Activated CD4-positive, alpha-beta T cell treated with anti-CD3 and anti-CD28 coated beads for 36 hours (primary cell): ENCODE measurements at regions of chr11 and their contacts with region 1.

Region 1: GRCh38 chr11:2444821-2445745 is at the start of gene KCNQ1:
- DNase-seq: peak; percentile 63
- ATAC-seq: peak; percentile 63
- H3K4me3 Mint-ChIP-seq: peak within 1 kb of the TSS; percentile 86
- H3K27ac Mint-ChIP-seq: peak within 1 kb of the TSS; percentile 71
- H3K4me1 Mint-ChIP-seq: peaks cover 38% of the 10 kb centered on the region
- H3K27me3 Mint-ChIP-seq: no peaks in the 10 kb centered on the region
- total RNA-seq, gene KCNQ1: 9.1 to 10.9 TPM

Region 2: GRCh38 chr11:2377511-2378443 is 67.3 kb before region 1 on chr11:
- CTCF ChIA-PET with region 1: interaction called, 3 read pairs
- POLR2A ChIA-PET with region 1: interaction called, 5 read pairs
- intact Hi-C with region 1: loop called in 1 of 2 experiments (anchors 1 kb)
- DNase-seq: peak; percentile 80
- ATAC-seq: peak; percentile 57
- H3K4me3 Mint-ChIP-seq: peak overlapping the region; percentile 86
- H3K27ac Mint-ChIP-seq: peak overlapping the region; percentile 75
- H3K4me1 Mint-ChIP-seq: peaks cover 28% of the 10 kb centered on the region
- H3K27me3 Mint-ChIP-seq: no peaks in the 10 kb centered on the region

Region 3: DNA sequence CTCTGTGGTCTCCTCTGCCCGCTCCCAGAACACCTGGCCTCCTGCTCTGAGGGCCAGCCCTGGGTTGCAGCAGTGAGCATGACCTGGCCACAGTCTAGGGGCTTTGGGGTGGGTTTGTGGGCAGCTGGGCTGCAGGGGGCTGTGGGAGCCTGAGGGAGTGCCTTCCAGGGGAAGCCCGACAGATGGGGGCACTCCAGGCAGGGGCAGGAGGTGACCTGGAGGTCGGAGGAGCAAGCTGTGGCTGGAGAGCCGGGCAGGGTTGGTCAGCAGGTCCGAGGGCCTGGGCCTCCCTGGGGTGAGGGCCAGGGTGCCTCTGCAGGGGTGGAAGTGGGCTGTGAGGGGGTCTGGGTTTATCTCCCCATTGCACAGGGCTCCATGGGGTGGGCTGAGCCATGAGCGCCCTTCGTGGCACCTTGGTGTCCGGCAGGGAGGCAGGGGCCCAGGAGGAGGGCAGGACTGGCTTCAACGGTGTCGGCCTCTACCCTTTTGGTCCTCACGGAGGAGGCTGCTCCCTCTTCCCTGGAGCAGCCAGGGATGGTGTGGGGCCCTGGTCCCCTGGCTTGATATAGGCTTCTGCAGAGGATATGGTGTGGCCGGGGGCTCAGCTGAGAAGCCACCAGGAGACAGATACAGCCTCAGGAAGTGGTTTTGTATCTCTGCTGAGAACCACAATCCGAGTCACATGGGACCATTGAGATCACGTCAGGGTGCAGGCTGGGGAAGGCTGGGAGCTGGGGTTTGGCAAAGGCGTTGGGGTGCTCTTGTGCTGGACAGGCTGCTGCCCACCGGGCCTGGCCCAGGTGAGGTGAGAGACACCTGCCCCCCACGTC is 22.0 kb after region 1 on chr11:
- CTCF ChIA-PET with region 1: no interaction called
- POLR2A ChIA-PET with region 1: no interaction called
- intact Hi-C with region 1: loop called in 1 of 2 experiments (anchors 2 kb)
- DNase-seq: peak; percentile 75
- ATAC-seq: peak; percentile 99
- H3K4me3 Mint-ChIP-seq: no peak overlapping the region
- H3K27ac Mint-ChIP-seq: peak overlapping the region; percentile 47
- H3K4me1 Mint-ChIP-seq: peaks cover 48% of the 10 kb centered on the region
- H3K27me3 Mint-ChIP-seq: no peaks in the 10 kb centered on the region

Region 4: DNA sequence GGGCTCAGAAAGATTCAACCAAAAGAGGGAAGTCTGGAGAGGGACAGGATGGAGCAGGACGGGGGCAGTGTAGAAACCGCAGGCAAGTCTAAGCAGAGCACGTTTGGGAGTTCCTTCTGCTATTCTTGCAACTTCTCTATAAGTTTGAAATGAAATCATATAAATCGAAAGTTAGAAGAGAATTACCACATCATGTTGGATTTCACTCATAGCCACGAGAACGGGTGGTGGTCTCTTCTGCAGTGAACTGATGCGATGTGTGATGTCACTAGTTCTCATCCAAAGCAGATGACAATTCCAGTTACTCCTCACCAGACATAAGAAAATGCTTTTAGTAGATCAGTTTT is 35.8 kb after region 1 on chr11:
- CTCF ChIA-PET with region 1: no interaction called
- POLR2A ChIA-PET with region 1: no interaction called
- intact Hi-C with region 1: loop called (anchors 2 to 5 kb)
- DNase-seq: peak; percentile 47
- ATAC-seq: peak; percentile 76
- H3K4me3 Mint-ChIP-seq: peak overlapping the region; percentile 53
- H3K27ac Mint-ChIP-seq: peak overlapping the region; percentile 95
- H3K4me1 Mint-ChIP-seq: peaks cover 26% of the 10 kb centered on the region
- H3K27me3 Mint-ChIP-seq: no peaks in the 10 kb centered on the region

Region 5: DNA sequence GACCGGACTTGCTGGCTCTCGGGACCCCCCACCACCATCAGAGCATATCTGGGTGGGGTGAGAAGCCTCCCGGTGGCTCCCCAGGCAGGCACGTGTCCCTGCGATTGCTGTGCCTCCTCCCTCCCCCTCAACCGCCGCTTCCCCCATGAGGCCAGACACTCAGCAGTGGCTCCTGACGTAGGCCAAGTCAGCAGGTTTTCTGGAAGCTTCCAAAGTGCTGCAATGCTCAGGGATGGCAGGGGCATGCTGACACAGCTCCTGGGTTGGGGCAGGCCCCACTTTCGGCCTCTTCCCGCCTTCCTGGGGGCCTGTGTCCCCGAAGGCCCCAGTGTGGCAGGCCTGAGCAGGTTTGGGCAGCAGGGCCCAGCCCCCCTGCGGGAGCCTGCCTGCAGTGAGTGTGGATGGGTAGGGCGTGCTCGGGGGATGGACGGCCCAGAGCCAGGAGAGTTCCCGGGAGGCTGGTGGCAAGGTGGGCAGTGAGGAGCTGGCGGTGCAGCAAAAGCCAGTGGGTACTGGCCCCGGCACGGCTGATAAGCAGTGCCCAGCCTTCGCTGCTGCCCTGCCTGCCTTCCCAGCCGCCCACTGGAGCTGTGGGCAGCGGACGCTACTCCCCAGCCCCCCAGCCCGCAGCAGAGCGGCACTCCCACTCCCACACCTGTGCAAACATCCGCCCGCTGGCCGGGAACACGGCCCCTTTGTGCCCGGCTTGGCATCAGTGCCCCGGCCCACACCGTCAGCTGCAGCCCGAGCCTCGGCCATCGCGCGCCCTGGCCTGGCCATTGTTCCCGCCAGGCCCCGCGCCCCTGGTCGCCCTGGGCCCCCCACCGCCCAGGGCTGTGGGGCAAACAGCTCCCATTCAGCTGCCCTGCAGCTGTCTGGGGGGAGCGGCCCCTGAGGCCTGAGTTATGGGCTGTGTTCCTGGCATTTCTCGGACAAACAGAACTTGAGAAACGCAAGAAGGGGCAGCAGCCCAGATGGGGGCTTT is 129.8 kb after region 1 on chr11:
- CTCF ChIA-PET with region 1: no interaction called
- POLR2A ChIA-PET with region 1: no interaction called
- intact Hi-C with region 1: no loop called
- DNase-seq: peak; percentile 2
- ATAC-seq: no peak
- H3K4me3 Mint-ChIP-seq: no peak overlapping the region
- H3K27ac Mint-ChIP-seq: no peak overlapping the region
- H3K4me1 Mint-ChIP-seq: no peaks in the 10 kb centered on the region
- H3K27me3 Mint-ChIP-seq: no peaks in the 10 kb centered on the region

Region 6: DNA sequence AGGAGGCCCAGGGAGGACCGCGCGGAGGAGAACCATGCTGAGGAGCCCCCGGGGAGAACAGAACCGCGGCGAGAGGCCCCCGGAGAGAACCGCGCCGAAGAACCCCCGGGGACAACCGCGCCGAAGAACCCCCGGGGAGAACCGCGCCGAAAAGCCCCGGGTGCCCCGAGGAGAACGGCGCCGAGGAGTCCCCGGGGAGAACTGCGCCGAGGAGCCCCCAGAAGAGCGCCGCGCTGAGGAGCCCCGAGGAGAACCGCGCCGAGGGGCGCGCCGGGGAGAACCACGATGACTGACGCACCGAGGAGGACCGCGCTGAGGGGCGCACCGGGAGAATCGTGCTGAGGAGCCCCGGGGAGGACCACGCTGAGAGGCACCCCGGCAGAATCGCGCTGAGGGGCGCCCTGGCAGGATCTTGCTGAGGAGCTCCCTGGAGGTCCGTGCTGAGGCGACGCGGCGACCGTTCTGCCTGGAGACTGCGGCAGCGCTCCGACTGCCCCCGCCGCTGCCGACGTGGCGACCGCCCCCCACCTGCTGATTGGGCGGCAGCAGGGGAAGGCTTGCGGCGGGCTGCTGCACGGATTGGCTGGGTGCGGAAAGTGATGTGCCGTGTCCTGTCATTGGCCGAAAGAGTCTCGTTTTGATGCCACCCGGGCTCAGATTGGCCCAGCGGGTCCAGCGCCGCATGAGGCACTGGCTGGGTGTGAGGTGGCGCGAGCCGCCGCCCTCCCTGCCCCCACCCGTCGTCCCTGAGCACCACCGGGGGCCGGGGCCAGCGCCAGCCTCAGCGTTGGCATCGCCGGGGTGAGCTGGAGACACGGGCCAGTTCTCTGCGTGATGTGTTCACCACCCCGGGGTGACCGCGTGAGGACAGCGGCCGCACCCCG is 254.7 kb after region 1 on chr11 and contains the start of gene KCNQ1OT1:
- CTCF ChIA-PET with region 1: no interaction called
- POLR2A ChIA-PET with region 1: no interaction called
- intact Hi-C with region 1: loop called in 1 of 2 experiments (anchors 1 kb)
- DNase-seq: peak; percentile 91
- ATAC-seq: peak; percentile 98
- H3K4me3 Mint-ChIP-seq: peak within 1 kb of the TSS; percentile 79
- H3K27ac Mint-ChIP-seq: peak within 1 kb of the TSS; percentile 28
- H3K4me1 Mint-ChIP-seq: peaks cover 8% of the 10 kb centered on the region
- H3K27me3 Mint-ChIP-seq: no peaks in the 10 kb centered on the region
- total RNA-seq, gene KCNQ1OT1: 0.16 TPM

Region 7: GRCh38 chr11:2901854-2902783 is 457.0 kb after region 1 on chr11:
- CTCF ChIA-PET with region 1: no interaction called
- POLR2A ChIA-PET with region 1: no interaction called
- intact Hi-C with region 1: loop called in 1 of 2 experiments (anchors 1 kb)
- DNase-seq: peak; percentile 98
- ATAC-seq: peak; percentile 96
- H3K4me3 Mint-ChIP-seq: peak overlapping the region; percentile 64
- H3K27ac Mint-ChIP-seq: peak overlapping the region; percentile 22
- H3K4me1 Mint-ChIP-seq: peaks cover 33% of the 10 kb centered on the region
- H3K27me3 Mint-ChIP-seq: no peaks in the 10 kb centered on the region

Region 8: DNA sequence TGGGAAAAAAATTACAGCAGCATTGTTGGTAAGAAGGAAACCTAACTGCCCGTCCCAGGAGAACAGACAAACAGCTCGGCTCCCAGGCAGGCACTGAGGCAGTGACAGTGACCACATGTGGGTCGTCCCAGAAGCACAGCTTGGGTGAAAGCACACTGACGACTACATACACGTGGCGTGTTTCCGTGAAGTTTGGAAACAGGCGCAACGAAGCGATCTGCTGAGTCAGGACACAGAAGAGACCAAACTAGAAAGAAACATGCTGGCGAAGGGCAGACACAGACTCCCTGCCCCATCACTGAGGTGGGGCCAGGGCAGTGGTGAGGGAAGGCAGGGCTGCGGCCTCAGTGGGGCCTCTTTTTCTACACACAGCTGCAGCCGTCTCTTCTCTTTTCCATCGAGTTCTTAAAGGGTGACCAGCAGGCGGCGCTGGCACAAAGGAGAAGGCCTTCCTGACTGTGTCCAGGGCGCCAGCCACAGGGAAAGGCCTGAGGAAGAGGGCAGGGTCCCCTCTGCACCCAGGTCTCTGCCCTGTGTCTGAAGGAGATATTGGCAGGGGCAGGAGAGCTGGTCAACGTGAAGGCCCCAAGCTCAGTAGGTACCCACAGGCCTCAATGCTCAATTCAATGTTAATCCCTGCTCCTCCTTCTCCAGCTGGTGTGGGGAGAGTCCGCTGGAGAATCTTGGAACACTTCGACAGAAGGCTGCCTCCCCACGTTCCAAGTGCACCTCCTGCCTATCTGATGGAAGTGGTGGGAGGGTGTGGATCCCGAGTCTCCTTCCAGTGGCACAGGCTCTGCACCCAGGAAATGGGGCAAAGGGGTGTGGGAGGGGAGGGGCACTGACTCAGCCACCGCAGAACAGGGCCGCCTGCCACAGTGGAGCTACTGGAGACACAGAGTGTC is 592.2 kb after region 1 on chr11:
- CTCF ChIA-PET with region 1: no interaction called
- POLR2A ChIA-PET with region 1: no interaction called
- intact Hi-C with region 1: no loop called
- DNase-seq: peak; percentile 71
- ATAC-seq: peak; percentile 87
- H3K4me3 Mint-ChIP-seq: no peak overlapping the region
- H3K27ac Mint-ChIP-seq: no peak overlapping the region
- H3K4me1 Mint-ChIP-seq: peaks cover 23% of the 10 kb centered on the region
- H3K27me3 Mint-ChIP-seq: no peaks in the 10 kb centered on the region